Activated CD8-positive, alpha-beta T cell treated with anti-CD3 and anti-CD28 coated beads for 36 hours (primary cell): ENCODE measurements at regions of chr10 and their contacts with region 1.

Region 1: DNA sequence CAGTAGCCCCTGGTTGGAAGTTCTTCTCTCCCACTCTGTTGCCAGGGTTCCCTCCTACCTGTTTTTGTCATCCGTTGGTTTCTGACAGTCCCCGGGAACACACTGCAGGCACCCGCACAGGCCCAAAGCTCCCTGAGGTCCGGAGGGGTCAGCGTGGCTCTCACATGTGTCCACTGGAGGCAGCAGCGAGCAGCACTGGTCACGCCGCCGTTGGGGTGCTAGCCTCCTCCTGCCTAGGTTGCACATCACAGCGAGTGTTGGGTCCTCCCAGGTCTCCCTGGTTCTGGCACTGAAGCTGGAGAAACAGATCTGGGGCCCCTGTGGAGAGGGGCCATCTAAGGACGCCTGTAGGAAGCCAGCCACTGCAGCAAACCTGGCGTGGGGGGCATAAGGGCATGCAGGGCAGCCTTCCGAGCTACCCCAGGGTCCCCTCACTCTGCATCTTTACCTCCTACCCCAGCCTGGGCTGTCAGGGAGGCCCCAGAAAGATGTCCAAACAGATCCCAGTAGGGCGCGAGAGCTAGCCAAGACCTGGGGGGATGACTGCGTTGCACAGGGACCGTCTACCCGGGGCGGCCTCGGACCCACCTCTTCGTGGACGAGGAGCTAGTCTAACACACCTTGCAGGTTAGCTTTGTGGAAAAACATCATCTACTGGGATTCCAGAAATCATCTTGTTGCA is 28.9 kb downstream of the LRRC27 start:
- DNase-seq: peak; percentile 60
- ATAC-seq: peak; percentile 68
- H3K4me3 Mint-ChIP-seq: no peak overlapping the region
- H3K27ac Mint-ChIP-seq: no peak overlapping the region
- H3K4me1 Mint-ChIP-seq: peaks cover 3% of the 10 kb centered on the region
- H3K27me3 Mint-ChIP-seq: no peaks in the 10 kb centered on the region
- CTCF ChIP-seq: peak; percentile 61

Region 2: GRCh38 chr10:132223156-132223590 is 137.7 kb before region 1 on chr10:
- CTCF ChIA-PET with region 1: no interaction called
- POLR2A ChIA-PET with region 1: no interaction called
- intact Hi-C with region 1: loop called (anchors 10 kb)
- DNase-seq: peak; percentile 82
- ATAC-seq: peak; percentile 98
- H3K4me3 Mint-ChIP-seq: no peak overlapping the region
- H3K27ac Mint-ChIP-seq: no peak overlapping the region
- H3K4me1 Mint-ChIP-seq: peaks cover 4% of the 10 kb centered on the region
- H3K27me3 Mint-ChIP-seq: no peaks in the 10 kb centered on the region
- CTCF ChIP-seq: peak; percentile 93

Region 3: GRCh38 chr10:132347211-132347930 is 13.5 kb before region 1 on chr10:
- CTCF ChIA-PET with region 1: interaction called, 16 read pairs
- POLR2A ChIA-PET with region 1: no interaction called
- intact Hi-C with region 1: no loop called
- DNase-seq: no peak
- ATAC-seq: no peak
- H3K4me3 Mint-ChIP-seq: no peak overlapping the region
- H3K27ac Mint-ChIP-seq: no peak overlapping the region
- H3K4me1 Mint-ChIP-seq: no peaks in the 10 kb centered on the region
- H3K27me3 Mint-ChIP-seq: no peaks in the 10 kb centered on the region
- CTCF ChIP-seq: no peak

Region 4: GRCh38 chr10:132390921-132391678 is 30.2 kb after region 1 on chr10:
- CTCF ChIA-PET with region 1: no interaction called
- POLR2A ChIA-PET with region 1: no interaction called
- intact Hi-C with region 1: no loop called
- DNase-seq: no peak
- ATAC-seq: no peak
- H3K4me3 Mint-ChIP-seq: no peak overlapping the region
- H3K27ac Mint-ChIP-seq: no peak overlapping the region
- H3K4me1 Mint-ChIP-seq: peaks cover 13% of the 10 kb centered on the region
- H3K27me3 Mint-ChIP-seq: no peaks in the 10 kb centered on the region
- CTCF ChIP-seq: no peak

Region 5: GRCh38 chr10:132463333-132464252 is 102.7 kb after region 1 on chr10:
- CTCF ChIA-PET with region 1: no interaction called
- POLR2A ChIA-PET with region 1: no interaction called
- intact Hi-C with region 1: no loop called
- DNase-seq: no peak
- ATAC-seq: no peak
- H3K4me3 Mint-ChIP-seq: no peak overlapping the region
- H3K27ac Mint-ChIP-seq: no peak overlapping the region
- H3K4me1 Mint-ChIP-seq: no peaks in the 10 kb centered on the region
- H3K27me3 Mint-ChIP-seq: no peaks in the 10 kb centered on the region
- CTCF ChIP-seq: no peak